ENCODE measurements at regions of chr14 and their contacts with region 1.

Region 1: GRCh38 chr14:96117100-96117897 is 78.1 kb downstream of the C14orf132 start:
- DNase-seq: peak in 7 of 9 donors; percentile 8 to 61 (median 46)
- ATAC-seq: peak; percentile 60
- H3K4me3 ChIP-seq: no peak overlapping the region
- H3K4me3 Mint-ChIP-seq: peak overlapping the region in 8 of 10 donors; percentile 15 to 72 (median 52)
- H3K27ac ChIP-seq: peak overlapping the region; percentile 71
- H3K27ac Mint-ChIP-seq: peak overlapping the region in 8 of 9 donors; percentile 84 to 94 (median 91)
- H3K4me1 ChIP-seq: peaks cover 0 to 20% of the 10 kb centered on the region in 2 donors
- H3K4me1 Mint-ChIP-seq: peaks cover 12 to 48% (median 39%) of the 10 kb centered on the region in 7 donors
- H3K27me3 ChIP-seq: no peaks in the 10 kb centered on the region
- H3K27me3 Mint-ChIP-seq: no peaks in the 10 kb centered on the region

Region 2: GRCh38 chr14:96053600-96054381 is 63.5 kb before region 1 on chr14:
- CTCF ChIA-PET with region 1: no interaction called
- POLR2A ChIA-PET with region 1: no interaction called
- intact Hi-C with region 1: no loop called
- DNase-seq: no peak
- ATAC-seq: no peak
- H3K4me3 ChIP-seq: no peak overlapping the region
- H3K4me3 Mint-ChIP-seq: no peak overlapping the region
- H3K27ac ChIP-seq: no peak overlapping the region
- H3K27ac Mint-ChIP-seq: no peak overlapping the region
- H3K4me1 ChIP-seq: no peaks in the 10 kb centered on the region
- H3K4me1 Mint-ChIP-seq: peaks cover 0 to 7% (median 0%) of the 10 kb centered on the region in 7 donors
- H3K27me3 ChIP-seq: no peaks in the 10 kb centered on the region
- H3K27me3 Mint-ChIP-seq: peaks cover 0 to 12% (median 6%) of the 10 kb centered on the region in 5 donors

Region 3: GRCh38 chr14:96198430-96199130 is 81.3 kb after region 1 on chr14:
- CTCF ChIA-PET with region 1: interaction called, 3 read pairs
- POLR2A ChIA-PET with region 1: no interaction called
- intact Hi-C with region 1: loop called in 1 of 2 experiments (anchors 5 kb)
- DNase-seq: peak in 7 of 9 donors; percentile 8 to 68 (median 40)
- ATAC-seq: peak; percentile 58
- H3K4me3 ChIP-seq: no peak overlapping the region
- H3K4me3 Mint-ChIP-seq: peak overlapping the region; percentile 29 to 88 (median 79)
- H3K27ac ChIP-seq: peak overlapping the region; percentile 17
- H3K27ac Mint-ChIP-seq: peak overlapping the region; percentile 67 to 91 (median 85)
- H3K4me1 ChIP-seq: peaks cover 0 to 11% of the 10 kb centered on the region in 2 donors
- H3K4me1 Mint-ChIP-seq: peaks cover 13 to 40% (median 36%) of the 10 kb centered on the region in 7 donors
- H3K27me3 ChIP-seq: peaks cover 0 to 3% of the 10 kb centered on the region in 2 donors
- H3K27me3 Mint-ChIP-seq: peaks cover 4 to 24% (median 14%) of the 10 kb centered on the region in 5 donors

Region 4: GRCh38 chr14:96246535-96246839 is 129.2 kb after region 1 on chr14:
- CTCF ChIA-PET with region 1: no interaction called
- POLR2A ChIA-PET with region 1: no interaction called
- intact Hi-C with region 1: no loop called
- DNase-seq: no peak
- ATAC-seq: no peak
- H3K4me3 ChIP-seq: no peak overlapping the region
- H3K4me3 Mint-ChIP-seq: no peak overlapping the region
- H3K27ac ChIP-seq: no peak overlapping the region
- H3K27ac Mint-ChIP-seq: no peak overlapping the region
- H3K4me1 ChIP-seq: no peaks in the 10 kb centered on the region
- H3K4me1 Mint-ChIP-seq: no peaks in the 10 kb centered on the region
- H3K27me3 ChIP-seq: peaks cover 0 to 3% of the 10 kb centered on the region in 2 donors
- H3K27me3 Mint-ChIP-seq: peaks cover 2 to 23% (median 13%) of the 10 kb centered on the region in 5 donors

Region 5: DNA sequence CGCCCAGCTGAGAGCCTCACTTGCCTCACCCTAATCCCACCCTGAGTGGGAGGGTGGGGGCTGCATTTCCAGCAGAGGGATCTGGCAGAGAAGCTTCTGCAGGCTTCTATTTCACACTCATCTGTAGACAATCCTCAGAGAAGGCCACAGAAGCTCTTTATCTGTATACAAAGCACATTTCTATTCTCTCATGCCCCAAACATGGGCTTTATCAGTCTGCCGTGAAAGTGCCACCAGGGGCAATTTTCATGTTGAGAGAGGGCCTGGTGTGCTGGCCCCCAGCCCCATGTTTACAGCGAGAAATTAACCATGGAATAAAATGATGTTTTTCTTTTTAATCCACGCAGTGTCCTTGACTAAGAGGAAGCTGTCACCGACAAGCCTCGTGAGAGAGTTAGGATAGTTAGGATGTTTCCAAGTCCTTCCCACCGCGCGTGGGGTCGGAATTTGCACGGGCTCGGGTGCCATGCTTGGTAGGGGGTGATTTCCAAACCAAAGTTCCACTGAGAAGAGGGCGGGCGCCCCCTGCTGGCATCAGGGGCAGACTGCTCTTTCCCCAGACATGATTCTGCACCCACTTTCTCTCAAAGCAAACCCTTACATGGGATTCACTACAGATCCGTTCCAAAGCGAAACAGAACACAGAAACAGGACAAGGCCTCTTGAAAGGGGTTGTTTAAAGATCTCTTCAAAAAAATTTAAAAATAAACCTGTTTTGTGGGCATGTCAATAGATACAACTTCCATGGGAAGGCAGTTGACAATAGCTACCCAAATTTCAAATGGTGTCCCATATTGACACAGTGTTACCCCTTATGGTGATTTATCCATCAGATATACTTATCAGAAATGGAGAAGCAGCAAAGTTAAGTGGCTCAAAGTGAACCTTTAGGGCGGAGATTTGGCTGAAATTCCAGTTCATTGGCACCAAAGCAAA is 158.1 kb after region 1 on chr14:
- CTCF ChIA-PET with region 1: interaction called, 3 read pairs
- POLR2A ChIA-PET with region 1: no interaction called
- intact Hi-C with region 1: loop called in 1 of 2 experiments (anchors 5 kb)
- DNase-seq: peak; percentile 41 to 73 (median 67)
- ATAC-seq: peak; percentile 66
- H3K4me3 ChIP-seq: no peak overlapping the region
- H3K4me3 Mint-ChIP-seq: no peak overlapping the region
- H3K27ac ChIP-seq: no peak overlapping the region
- H3K27ac Mint-ChIP-seq: peak overlapping the region in 1 of 9 donors; percentile 9
- H3K4me1 ChIP-seq: peaks cover 0 to 2% of the 10 kb centered on the region in 2 donors
- H3K4me1 Mint-ChIP-seq: peaks cover 0 to 5% (median 0%) of the 10 kb centered on the region in 7 donors
- H3K27me3 ChIP-seq: no peaks in the 10 kb centered on the region
- H3K27me3 Mint-ChIP-seq: no peaks in the 10 kb centered on the region